Activated CD4-positive, alpha-beta T cell treated with anti-CD3 and anti-CD28 coated beads, Interleukin-2, amount 10 ng/mL, durations not matched to agents 24 days and 14 days (primary cell): ENCODE measurements at regions of chr6 and their contacts with region 1.

Region 1: GRCh38 chr6:144110210-144110609 is 14.8 kb upstream of the SF3B5 start:
- DNase-seq: no peak
- H3K4me3 Mint-ChIP-seq: no peak overlapping the region
- H3K27ac Mint-ChIP-seq: no peak overlapping the region
- H3K4me1 Mint-ChIP-seq: peaks cover 5% of the 10 kb centered on the region
- H3K27me3 Mint-ChIP-seq: peaks cover 5% of the 10 kb centered on the region

Region 2: DNA sequence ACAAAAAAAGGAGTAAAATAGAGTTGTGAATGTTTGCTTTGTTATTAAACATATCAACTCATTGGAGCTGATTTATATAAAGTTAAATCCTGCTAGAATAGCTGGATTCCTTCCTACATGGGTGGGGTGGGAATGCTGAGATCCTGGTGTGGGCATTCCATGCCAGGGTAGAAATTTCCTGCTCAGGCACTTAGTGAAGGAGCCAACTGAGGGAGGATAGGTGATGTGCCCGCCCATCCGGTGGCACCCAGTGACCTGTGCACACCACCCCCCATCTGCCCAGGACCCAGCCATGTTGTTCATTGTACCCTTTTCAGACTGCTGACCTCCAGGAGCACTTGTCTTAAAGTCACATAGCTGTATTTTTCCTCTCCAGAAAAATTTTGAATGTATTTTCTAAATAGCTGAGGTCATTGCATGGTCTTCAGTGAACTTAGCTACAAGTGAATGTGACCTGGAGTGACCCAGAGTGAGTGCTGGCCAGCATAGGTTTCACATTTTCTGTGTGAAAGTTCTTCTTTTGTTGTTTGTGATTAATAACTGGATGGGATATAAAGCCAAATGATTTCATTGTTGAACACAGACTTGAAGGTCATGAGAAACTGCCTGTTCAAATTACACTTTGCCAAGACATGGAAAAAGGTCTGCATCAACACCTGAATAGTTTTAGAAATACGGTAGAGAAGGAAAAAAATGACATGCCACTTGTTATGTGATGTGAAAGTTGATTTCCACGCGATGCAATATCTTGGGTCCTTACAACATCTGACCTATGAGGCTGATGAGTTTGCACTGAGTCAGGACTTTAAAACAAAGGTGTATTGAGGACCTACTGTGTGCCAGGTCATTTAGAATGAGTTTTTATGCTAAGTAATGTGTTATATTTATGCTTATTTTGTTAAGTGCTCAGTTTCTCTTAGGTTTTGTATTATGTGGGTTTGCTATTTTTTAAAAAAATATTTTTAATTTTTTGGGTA is 252.1 kb after region 1 on chr6:
- intact Hi-C with region 1: loop called (anchors 5 kb)
- DNase-seq: peak; percentile 43
- H3K4me3 Mint-ChIP-seq: no peak overlapping the region
- H3K27ac Mint-ChIP-seq: no peak overlapping the region
- H3K4me1 Mint-ChIP-seq: peaks cover 37% of the 10 kb centered on the region
- H3K27me3 Mint-ChIP-seq: no peaks in the 10 kb centered on the region